Right cardiac atrium (tissue), 5 donors: ENCODE measurements at regions of chr10 and their contacts with region 1.

Region 1: DNA sequence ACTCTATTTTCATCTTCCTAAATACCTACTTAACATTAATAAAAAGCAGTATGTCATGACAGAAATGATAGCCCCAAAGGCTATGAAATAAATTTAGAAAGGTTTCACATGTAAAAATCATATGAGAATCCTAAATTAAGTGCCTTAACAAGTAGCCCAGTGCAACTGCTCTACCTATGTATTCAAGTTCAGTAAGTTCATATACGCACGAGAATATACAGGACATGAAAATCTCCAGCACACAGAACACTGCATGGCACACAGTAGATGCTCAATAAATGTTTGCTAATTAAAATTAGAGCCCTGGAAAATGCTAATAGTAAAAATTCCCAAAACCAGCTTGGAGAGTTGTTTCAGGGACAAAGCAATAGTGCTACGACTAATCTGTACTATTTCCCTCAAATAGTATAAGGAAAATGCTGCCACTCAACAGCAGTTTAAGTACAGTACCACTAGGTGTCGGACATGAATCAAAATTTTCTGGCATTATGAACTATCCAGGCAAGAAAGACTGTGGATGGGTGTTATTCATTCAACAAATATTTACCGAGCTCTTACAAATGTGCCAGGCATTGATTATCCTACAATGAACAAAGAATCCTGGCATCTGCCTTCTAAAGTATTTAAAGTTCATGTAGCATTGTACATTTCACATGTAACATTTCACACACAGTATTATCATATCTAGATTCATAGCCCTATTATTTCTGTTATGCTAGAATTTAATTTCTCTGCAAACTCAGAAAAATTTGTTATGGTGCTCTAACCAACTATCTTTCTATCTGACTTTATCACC is 80.9 kb downstream of the ARHGAP21 start:
- DNase-seq: no peak
- ATAC-seq: peak; percentile 89 to 93
- H3K4me3 ChIP-seq: no peak overlapping the region
- H3K27ac ChIP-seq: no peak overlapping the region
- H3K4me1 ChIP-seq: no peaks in the 10 kb centered on the region
- H3K27me3 ChIP-seq: no peaks in the 10 kb centered on the region

Region 2: GRCh38 chr10:24718031-24718855 is 75.4 kb after region 1 on chr10:
- intact Hi-C with region 1: loop called in 3 of 4 experiments (anchors 5 to 10 kb)
- DNase-seq: no peak
- ATAC-seq: no peak
- H3K4me3 ChIP-seq: no peak overlapping the region
- H3K27ac ChIP-seq: no peak overlapping the region
- H3K4me1 ChIP-seq: peaks cover 18% of the 10 kb centered on the region
- H3K27me3 ChIP-seq: no peaks in the 10 kb centered on the region

Region 3: DNA sequence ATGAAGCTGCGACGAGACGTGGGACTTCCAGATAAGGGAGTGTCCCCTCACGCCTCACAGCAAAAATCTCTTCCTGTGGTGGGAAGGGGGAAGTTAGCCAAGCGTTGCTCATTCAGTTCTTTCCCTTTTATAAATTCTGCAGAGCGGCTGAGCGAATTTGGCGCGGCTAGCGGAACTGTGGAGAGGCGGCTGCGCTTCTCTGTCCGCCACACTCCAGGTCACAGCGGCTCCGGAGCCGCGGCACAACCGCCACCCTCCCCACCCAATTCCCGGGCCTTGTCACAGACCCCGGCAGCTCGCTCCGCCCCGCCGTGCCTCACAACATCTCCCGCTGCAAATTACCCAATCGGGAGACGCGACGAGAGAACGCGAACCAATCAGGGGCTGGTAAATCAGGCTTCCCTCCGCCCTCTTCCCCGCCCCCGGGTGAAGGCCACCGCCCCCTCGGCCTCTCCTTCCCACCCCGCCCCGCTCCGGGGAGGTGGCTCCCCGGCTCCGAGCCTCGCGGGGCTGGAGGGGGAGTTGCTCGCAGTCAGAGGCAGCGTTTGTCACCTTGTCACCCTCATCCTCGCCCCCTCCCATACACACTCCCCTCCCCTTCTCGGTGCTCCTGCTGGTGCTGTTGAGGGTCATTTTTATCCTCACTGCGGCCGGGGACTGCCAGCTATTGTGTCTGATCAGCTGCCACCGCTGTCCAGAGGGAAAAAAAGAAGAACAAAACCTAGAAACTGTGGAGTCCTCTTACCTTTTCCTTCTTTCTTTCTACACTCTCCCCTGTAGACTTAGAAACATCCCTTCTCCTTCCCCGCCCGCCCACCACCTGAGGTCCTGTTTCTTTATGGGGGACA is 81.8 kb after region 1 on chr10:
- intact Hi-C with region 1: loop called in 3 of 4 experiments (anchors 5 to 10 kb)
- DNase-seq: peak; percentile 98 to 100 (median 99)
- ATAC-seq: peak; percentile 95
- H3K4me3 ChIP-seq: peak overlapping the region; percentile 100
- H3K27ac ChIP-seq: peak overlapping the region; percentile 89
- H3K4me1 ChIP-seq: no peaks in the 10 kb centered on the region
- H3K27me3 ChIP-seq: no peaks in the 10 kb centered on the region

Region 4: GRCh38 chr10:24771941-24772694 is 129.3 kb after region 1 on chr10:
- intact Hi-C with region 1: no loop called
- DNase-seq: no peak
- ATAC-seq: peak in 1 of 2 donors; percentile 31
- H3K4me3 ChIP-seq: no peak overlapping the region
- H3K27ac ChIP-seq: no peak overlapping the region
- H3K4me1 ChIP-seq: no peaks in the 10 kb centered on the region
- H3K27me3 ChIP-seq: no peaks in the 10 kb centered on the region

Region 5: DNA sequence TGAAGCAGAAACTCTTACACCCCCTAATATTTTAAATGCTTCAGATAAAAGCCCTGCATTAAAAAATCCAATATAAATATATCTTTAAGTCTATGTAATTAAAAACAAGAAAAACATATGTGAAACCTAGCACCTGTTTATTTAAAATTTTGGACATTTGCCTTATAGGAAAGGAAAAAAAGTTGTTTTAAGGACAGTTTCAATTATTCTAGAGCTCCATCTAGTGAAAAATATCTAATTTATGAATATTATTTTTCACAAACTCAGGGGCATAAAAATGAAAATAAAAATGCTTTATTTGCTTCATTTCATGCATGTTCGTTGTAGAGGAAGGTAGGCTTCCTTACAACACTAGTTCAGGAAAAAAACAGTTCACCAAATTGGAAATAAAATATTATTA is 347.0 kb after region 1 on chr10:
- intact Hi-C with region 1: loop called in 3 of 4 experiments (anchors 5 to 10 kb)
- DNase-seq: no peak
- ATAC-seq: no peak
- H3K4me3 ChIP-seq: no peak overlapping the region
- H3K27ac ChIP-seq: no peak overlapping the region
- H3K4me1 ChIP-seq: no peaks in the 10 kb centered on the region
- H3K27me3 ChIP-seq: no peaks in the 10 kb centered on the region

Region 6: GRCh38 chr10:25080880-25081581 is 438.2 kb after region 1 on chr10:
- intact Hi-C with region 1: loop called in 1 of 4 experiments (anchors 10 kb)
- DNase-seq: peak; percentile 76 to 88 (median 80)
- ATAC-seq: peak; percentile 95 to 96
- H3K4me3 ChIP-seq: no peak overlapping the region
- H3K27ac ChIP-seq: no peak overlapping the region
- H3K4me1 ChIP-seq: no peaks in the 10 kb centered on the region
- H3K27me3 ChIP-seq: no peaks in the 10 kb centered on the region